Thyroid gland (tissue), 4 donors: ENCODE measurements at regions of chr2 and their contacts with region 1.

Region 1: GRCh38 chr2:112726497-112727190 is 5.8 kb downstream of the NT5DC4 start:
- DNase-seq: peak; percentile 92 to 95
- H3K4me3 ChIP-seq: no peak overlapping the region
- H3K27ac ChIP-seq: peak overlapping the region in 1 of 3 donors; percentile 24
- H3K4me1 ChIP-seq: peaks cover 12 to 31% of the 10 kb centered on the region in 2 donors
- H3K27me3 ChIP-seq: no peaks in the 10 kb centered on the region
- CTCF ChIP-seq: peak; percentile 74 to 97 (median 96)
- POLR2A ChIP-seq: no peak

Region 2: DNA sequence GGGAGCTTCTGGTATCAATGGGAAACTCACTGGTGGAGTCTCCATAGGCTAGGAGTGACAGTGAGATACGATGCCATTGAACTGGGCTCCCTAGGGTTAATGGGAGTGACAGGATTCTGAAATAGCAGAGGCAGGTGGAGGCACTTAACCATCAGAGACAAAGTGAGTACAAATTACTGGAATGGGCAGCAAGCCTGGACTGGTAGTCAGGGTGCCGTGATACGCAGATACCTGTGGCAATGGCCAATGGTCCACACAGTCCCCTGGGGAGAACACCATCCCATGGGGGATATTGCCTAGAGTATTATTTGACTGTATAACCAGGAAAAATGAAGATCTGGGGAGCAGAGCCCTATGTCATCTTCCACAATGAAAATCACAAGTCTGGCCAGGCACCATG is 124.9 kb before region 1 on chr2:
- intact Hi-C with region 1: loop called (anchors 5 kb)
- DNase-seq: no peak
- H3K4me3 ChIP-seq: no peak overlapping the region
- H3K27ac ChIP-seq: no peak overlapping the region
- H3K4me1 ChIP-seq: no peaks in the 10 kb centered on the region
- H3K27me3 ChIP-seq: no peaks in the 10 kb centered on the region
- CTCF ChIP-seq: no peak
- POLR2A ChIP-seq: no peak

Region 3: DNA sequence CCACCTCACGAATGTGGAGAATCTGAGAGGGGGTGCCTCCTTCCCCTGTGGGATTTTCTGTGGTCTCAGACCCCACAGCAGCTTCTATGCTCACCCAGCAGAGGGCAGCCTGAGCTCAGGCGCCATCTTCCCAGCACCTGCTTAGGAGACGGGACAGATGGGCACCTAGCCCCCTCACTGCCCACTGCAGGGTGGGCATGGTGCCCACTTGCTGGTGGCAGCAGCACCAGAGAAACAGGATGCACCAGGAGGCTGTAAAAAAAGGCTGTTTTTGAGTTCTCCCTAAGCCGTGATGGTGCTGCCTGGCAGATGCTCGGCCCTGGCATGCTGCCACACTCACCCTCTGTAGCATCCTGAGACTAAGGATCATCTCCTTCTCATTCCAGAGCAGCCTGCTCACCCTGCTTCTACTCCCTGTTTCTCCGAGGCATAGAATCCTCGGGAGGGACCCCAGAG is 100.0 kb before region 1 on chr2:
- intact Hi-C with region 1: loop called (anchors 5 kb)
- DNase-seq: peak; percentile 52 to 53
- H3K4me3 ChIP-seq: no peak overlapping the region
- H3K27ac ChIP-seq: peak overlapping the region; percentile 13 to 55 (median 40)
- H3K4me1 ChIP-seq: peaks cover 0 to 25% of the 10 kb centered on the region in 2 donors
- H3K27me3 ChIP-seq: no peaks in the 10 kb centered on the region
- CTCF ChIP-seq: peak; percentile 23 to 83 (median 71)
- POLR2A ChIP-seq: no peak